Activated CD4-positive, alpha-beta T cell treated with anti-CD3 and anti-CD28 coated beads, Interleukin-2, amount 10 ng/mL, durations not matched to agents 7 days and 5 days (primary cell): ENCODE measurements at regions of chr20 and their contacts with region 1.

Region 1: GRCh38 chr20:3710703-3711483 is 1.5 kb downstream of the SIGLEC1 start:
- DNase-seq: peak; percentile 72
- H3K4me3 Mint-ChIP-seq: no peak overlapping the region
- H3K27ac Mint-ChIP-seq: no peak overlapping the region
- H3K4me1 Mint-ChIP-seq: no peaks in the 10 kb centered on the region
- H3K27me3 Mint-ChIP-seq: no peaks in the 10 kb centered on the region

Region 2: GRCh38 chr20:3502878-3503277 is 208.0 kb before region 1 on chr20:
- CTCF ChIA-PET with region 1: no interaction called
- POLR2A ChIA-PET with region 1: no interaction called
- DNase-seq: no peak
- H3K4me3 Mint-ChIP-seq: no peak overlapping the region
- H3K27ac Mint-ChIP-seq: no peak overlapping the region
- H3K4me1 Mint-ChIP-seq: peaks cover 2% of the 10 kb centered on the region
- H3K27me3 Mint-ChIP-seq: no peaks in the 10 kb centered on the region

Region 3: GRCh38 chr20:3677733-3678132 is 33.2 kb before region 1 on chr20:
- CTCF ChIA-PET with region 1: interaction called, 10 read pairs
- POLR2A ChIA-PET with region 1: no interaction called
- DNase-seq: no peak
- H3K4me3 Mint-ChIP-seq: no peak overlapping the region
- H3K27ac Mint-ChIP-seq: no peak overlapping the region
- H3K4me1 Mint-ChIP-seq: peaks cover 6% of the 10 kb centered on the region
- H3K27me3 Mint-ChIP-seq: peaks cover 56% of the 10 kb centered on the region

Region 4: DNA sequence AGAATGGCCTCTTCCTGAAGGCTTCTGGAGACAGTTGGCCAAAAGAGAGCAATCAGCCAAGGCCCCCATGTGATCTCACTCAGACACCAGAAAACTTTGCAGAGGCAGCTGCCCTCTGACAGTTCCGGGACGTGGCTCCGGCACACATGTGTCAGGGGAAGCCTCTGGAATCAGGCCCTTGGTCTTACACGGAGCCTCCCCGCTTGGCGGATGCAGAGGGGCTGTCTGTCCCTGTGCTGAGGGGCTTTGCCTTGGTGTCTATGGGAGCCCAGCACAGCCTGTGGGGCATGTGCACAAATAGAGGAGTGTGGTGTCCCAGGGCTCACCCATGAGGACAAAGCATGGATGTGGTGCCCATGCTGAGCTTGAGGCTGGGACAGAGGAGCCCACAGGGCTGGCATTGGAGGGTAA is 12.3 kb before region 1 on chr20:
- CTCF ChIA-PET with region 1: interaction called, 12 read pairs
- POLR2A ChIA-PET with region 1: no interaction called
- DNase-seq: no peak
- H3K4me3 Mint-ChIP-seq: no peak overlapping the region
- H3K27ac Mint-ChIP-seq: no peak overlapping the region
- H3K4me1 Mint-ChIP-seq: no peaks in the 10 kb centered on the region
- H3K27me3 Mint-ChIP-seq: no peaks in the 10 kb centered on the region

Region 5: GRCh38 chr20:3727401-3728021 is 16.6 kb after region 1 on chr20:
- CTCF ChIA-PET with region 1: interaction called, 10 read pairs
- POLR2A ChIA-PET with region 1: no interaction called
- DNase-seq: no peak
- H3K4me3 Mint-ChIP-seq: no peak overlapping the region
- H3K27ac Mint-ChIP-seq: no peak overlapping the region
- H3K4me1 Mint-ChIP-seq: no peaks in the 10 kb centered on the region
- H3K27me3 Mint-ChIP-seq: peaks cover 41% of the 10 kb centered on the region